ENCODE measurements at regions of chr3 and their contacts with region 1.

Region 1: DNA sequence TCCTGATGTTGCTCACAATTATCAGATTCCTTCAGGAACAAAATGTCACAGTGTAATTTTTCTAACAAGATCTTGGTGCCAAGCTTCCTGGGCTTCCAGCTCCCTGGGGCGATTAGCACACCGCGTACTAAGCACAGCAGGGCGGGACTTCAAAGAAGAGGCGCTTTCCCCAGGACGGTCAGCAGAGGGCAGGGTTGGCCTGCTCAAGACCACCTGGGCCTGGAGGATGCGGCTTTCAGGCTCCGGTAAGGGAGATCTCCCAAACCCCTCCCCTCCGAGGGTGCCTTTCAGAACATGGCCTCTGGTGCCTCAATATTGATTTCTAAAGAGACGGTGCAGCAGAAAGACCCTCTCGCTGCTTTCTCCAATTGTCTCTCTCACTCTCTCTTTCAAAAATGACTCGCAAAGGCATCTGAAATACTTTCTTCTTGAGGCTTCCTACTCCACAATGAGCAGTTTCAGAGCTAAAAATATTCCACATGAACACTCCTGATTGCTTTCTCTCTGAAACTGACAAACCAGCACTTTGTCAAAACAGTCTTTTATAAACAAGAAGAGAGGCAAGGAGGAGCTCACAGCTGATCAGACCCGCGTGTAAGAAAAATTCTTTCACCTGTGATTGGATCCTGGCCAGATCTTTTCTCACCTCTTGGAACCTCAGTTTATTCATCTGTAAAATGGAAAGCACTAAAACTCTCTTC is 154.0 kb downstream of the ADAMTS9 start:
- DNase-seq: peak; percentile 83 to 87 (median 85)
- ATAC-seq: peak; percentile 96 to 97 (median 96)
- H3K4me3 ChIP-seq: peak overlapping the region in 3 of 12 donors; percentile 12 to 34 (median 14)
- H3K27ac ChIP-seq: peak overlapping the region in 4 of 12 donors; percentile 20 to 60 (median 34)
- H3K4me1 ChIP-seq: peaks cover 0 to 14% (median 2%) of the 10 kb centered on the region in 12 donors
- H3K27me3 ChIP-seq: no peaks in the 10 kb centered on the region
- CTCF ChIP-seq: peak; percentile 61 to 94 (median 89)
- POLR2A ChIP-seq: no peak

Region 2: DNA sequence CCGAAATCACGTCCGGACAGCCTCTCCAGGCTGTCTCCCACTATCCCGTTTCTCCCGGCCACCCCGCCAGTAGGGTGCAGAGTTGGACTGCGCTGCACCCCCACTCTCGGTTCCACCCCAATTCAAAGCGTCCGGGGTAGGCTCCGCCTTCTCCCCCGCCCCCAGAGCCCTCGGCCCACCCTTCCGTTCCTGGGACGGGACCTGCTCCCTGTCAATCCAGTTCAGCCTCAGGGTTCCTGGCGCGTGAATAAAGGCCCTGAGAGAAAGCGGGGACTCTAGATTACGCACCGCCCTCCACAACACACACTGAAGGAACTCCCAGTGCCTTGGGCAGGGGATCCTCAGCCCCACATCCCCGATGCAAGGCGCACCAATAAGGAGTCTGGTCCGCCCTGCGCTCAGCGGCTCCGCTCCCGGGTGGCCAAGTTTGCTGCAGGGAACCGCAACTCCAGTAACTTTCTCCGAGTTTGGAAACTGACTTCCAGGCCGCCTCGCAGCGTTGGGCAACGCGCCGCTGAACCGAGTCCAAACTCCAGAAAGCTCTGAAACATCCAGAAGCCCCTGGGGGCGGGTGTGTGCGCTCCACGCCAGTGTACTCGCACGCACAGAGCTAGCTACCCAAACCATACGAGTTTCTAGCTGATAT is 152.2 kb after region 1 on chr3:
- intact Hi-C with region 1: loop called in 8 of 10 experiments (anchors 1 to 10 kb)
- DNase-seq: peak; percentile 94 to 96 (median 95)
- ATAC-seq: peak; percentile 87 to 95 (median 92)
- H3K4me3 ChIP-seq: peak overlapping the region; percentile 60 to 86 (median 71)
- H3K27ac ChIP-seq: peak overlapping the region; percentile 89 to 98 (median 96)
- H3K4me1 ChIP-seq: peaks cover 0 to 50% (median 4%) of the 10 kb centered on the region in 12 donors
- H3K27me3 ChIP-seq: peaks cover 0 to 17% (median 0%) of the 10 kb centered on the region in 9 donors
- CTCF ChIP-seq: peak; percentile 28 to 81 (median 66)
- POLR2A ChIP-seq: peak; percentile 14 to 84

Region 3: GRCh38 chr3:64908292-64908691 is 374.5 kb after region 1 on chr3:
- intact Hi-C with region 1: loop called in 1 of 10 experiments (anchors 10 kb)
- DNase-seq: peak in 3 of 5 donors; percentile 52 to 66 (median 65)
- ATAC-seq: peak; percentile 85 to 96 (median 88)
- H3K4me3 ChIP-seq: no peak overlapping the region
- H3K27ac ChIP-seq: peak overlapping the region in 11 of 12 donors; percentile 16 to 81 (median 67)
- H3K4me1 ChIP-seq: peaks cover 4 to 61% (median 30%) of the 10 kb centered on the region in 12 donors
- H3K27me3 ChIP-seq: no peaks in the 10 kb centered on the region
- CTCF ChIP-seq: no peak
- POLR2A ChIP-seq: no peak

Region 4: GRCh38 chr3:65334045-65334665 is 800.4 kb after region 1 on chr3:
- intact Hi-C with region 1: loop called in 1 of 10 experiments (anchors 10 kb)
- DNase-seq: peak in 3 of 5 donors; percentile 32 to 58 (median 46)
- ATAC-seq: peak; percentile 39 to 75 (median 53)
- H3K4me3 ChIP-seq: no peak overlapping the region
- H3K27ac ChIP-seq: peak overlapping the region in 2 of 12 donors; percentile 3 to 13
- H3K4me1 ChIP-seq: peaks cover 0 to 30% (median 13%) of the 10 kb centered on the region in 12 donors
- H3K27me3 ChIP-seq: no peaks in the 10 kb centered on the region
- CTCF ChIP-seq: peak in 10 of 12 donors; percentile 3 to 56 (median 30)
- POLR2A ChIP-seq: no peak

Region 5: DNA sequence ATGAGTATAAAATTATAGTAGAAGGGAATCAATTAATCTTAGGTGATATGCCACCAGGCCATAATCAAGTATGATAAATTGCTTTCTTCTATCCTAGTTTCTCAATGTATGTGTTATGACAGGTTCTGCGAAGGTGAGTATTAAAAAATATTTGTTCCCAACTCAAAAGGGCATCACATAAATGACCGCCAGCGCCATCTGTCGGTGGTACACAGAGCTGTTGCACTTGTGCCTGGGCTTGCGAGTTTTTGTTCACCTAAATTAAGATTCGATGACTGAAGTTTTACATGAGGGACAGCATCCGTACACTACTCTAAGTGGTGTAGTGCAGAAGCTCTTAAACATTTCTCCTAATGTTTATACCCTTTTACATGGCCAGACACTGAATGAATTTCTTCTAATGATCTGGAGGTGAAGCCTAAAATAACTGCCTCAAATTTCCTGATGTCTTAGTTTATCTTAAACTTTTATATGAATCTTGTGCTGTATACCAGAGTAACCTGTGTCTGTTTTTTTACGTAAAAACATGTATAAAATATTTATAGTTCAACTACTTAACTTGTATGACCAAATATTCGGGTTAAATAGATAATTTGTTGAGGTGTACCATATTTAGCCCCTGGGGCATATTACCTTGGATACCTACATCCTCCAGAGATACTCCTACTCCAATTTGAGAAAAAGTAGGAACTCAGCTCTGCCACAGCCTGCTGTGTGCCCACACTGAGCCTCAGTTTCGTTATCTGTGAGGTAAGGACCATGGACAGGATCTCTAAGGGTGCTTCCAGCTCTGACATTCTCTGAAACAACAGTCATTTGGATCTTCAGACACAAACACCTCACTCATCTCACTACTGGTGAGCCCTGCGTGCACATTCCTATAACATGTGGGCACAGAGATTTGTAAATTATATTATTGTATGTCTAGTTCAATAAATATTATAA is 1139.4 kb after region 1 on chr3:
- intact Hi-C with region 1: loop called in 2 of 10 experiments (anchors 5 to 10 kb)
- DNase-seq: peak; percentile 45 to 72 (median 59)
- ATAC-seq: peak in 3 of 4 donors; percentile 26 to 65 (median 55)
- H3K4me3 ChIP-seq: no peak overlapping the region
- H3K27ac ChIP-seq: no peak overlapping the region
- H3K4me1 ChIP-seq: peaks cover 0 to 26% (median 2%) of the 10 kb centered on the region in 12 donors
- H3K27me3 ChIP-seq: no peaks in the 10 kb centered on the region
- CTCF ChIP-seq: peak; percentile 65 to 91 (median 82)
- POLR2A ChIP-seq: no peak